GM12878 (cell line): ENCODE measurements at regions of chr7 and their contacts with region 1.

Region 1: GRCh38 chr7:18345641-18346234 is 149.8 kb upstream of the HDAC9 start:
- DNase-seq: no peak
- ATAC-seq: peak; percentile 79
- H3K4me3 ChIP-seq: no peak overlapping the region
- H3K27ac ChIP-seq: no peak overlapping the region
- H3K4me1 ChIP-seq: no peaks in the 10 kb centered on the region
- H3K27me3 ChIP-seq: no peaks in the 10 kb centered on the region
- CTCF ChIP-seq: peak; percentile 67 to 73 (median 69)
- EP300 ChIP-seq: no peak
- POLR2A ChIP-seq: no peak
- RAD21 ChIP-seq: peak; percentile 80

Region 2: GRCh38 chr7:17680943-17681351 is 664.8 kb before region 1 on chr7:
- CTCF ChIA-PET with region 1: interaction called, 6 read pairs
- POLR2A ChIA-PET with region 1: no interaction called
- RAD21 ChIA-PET with region 1: interaction called, 8 read pairs
- SMC1A ChIA-PET with region 1: interaction called, 4 read pairs
- in situ Hi-C with region 1: loop called (anchors 25 kb)
- intact Hi-C with region 1: loop called (anchors 5 kb)
- DNase-seq: no peak
- ATAC-seq: peak; percentile 64; the same call in 2 of the 3 replicates
- H3K4me3 ChIP-seq: no peak overlapping the region
- H3K27ac ChIP-seq: no peak overlapping the region
- H3K4me1 ChIP-seq: no peaks in the 10 kb centered on the region
- H3K27me3 ChIP-seq: 0 out of 4 replicates have a peak, but pooled peaks cover 0 to 4% of the 10 kb centered on the region in 2 experiments
- CTCF ChIP-seq: peak in 2 of 3 experiments; percentile 40 to 44; a peak in 4 of 6 replicates
- EP300 ChIP-seq: no peak
- POLR2A ChIP-seq: no peak
- RAD21 ChIP-seq: peak; percentile 45

Region 3: DNA sequence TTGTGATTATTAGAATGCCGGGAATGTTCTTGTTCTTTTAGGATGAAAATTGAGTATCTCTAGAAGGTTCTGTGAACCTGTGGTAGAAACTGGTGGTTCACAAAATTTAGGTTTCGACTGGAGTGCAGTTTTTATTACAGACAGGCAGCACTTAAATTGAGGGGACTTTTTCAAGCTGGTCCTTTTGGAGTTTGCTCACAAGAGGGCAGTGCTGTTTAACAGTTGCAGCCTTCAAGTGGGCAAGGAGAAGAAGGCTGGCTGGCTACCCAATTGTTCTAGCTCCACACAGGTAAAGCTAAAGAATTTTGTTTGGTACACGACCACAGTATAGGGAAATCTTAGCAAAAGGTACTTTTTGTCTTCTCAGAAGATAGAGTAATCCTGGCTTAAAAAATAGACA is 639.0 kb before region 1 on chr7:
- CTCF ChIA-PET with region 1: interaction called, 15 read pairs
- POLR2A ChIA-PET with region 1: no interaction called
- RAD21 ChIA-PET with region 1: interaction called, 4 read pairs
- SMC1A ChIA-PET with region 1: interaction called, 5 read pairs
- in situ Hi-C with region 1: no loop called
- intact Hi-C with region 1: loop called (anchors 2 kb)
- DNase-seq: peak; percentile 12
- ATAC-seq: peak; percentile 93
- H3K4me3 ChIP-seq: no peak overlapping the region
- H3K27ac ChIP-seq: no peak overlapping the region
- H3K4me1 ChIP-seq: no peaks in the 10 kb centered on the region
- H3K27me3 ChIP-seq: no peaks in the 10 kb centered on the region
- CTCF ChIP-seq: peak; percentile 64 to 74 (median 68)
- EP300 ChIP-seq: no peak
- POLR2A ChIP-seq: no peak
- RAD21 ChIP-seq: peak; percentile 94

Region 4: GRCh38 chr7:18064242-18064838 is 281.4 kb before region 1 on chr7:
- CTCF ChIA-PET with region 1: interaction called, 5 read pairs
- POLR2A ChIA-PET with region 1: no interaction called
- RAD21 ChIA-PET with region 1: no interaction called
- SMC1A ChIA-PET with region 1: interaction called, 3 read pairs
- in situ Hi-C with region 1: no loop called
- intact Hi-C with region 1: loop called (anchors 1 kb)
- DNase-seq: no peak
- ATAC-seq: peak; percentile 68
- H3K4me3 ChIP-seq: no peak overlapping the region
- H3K27ac ChIP-seq: no peak overlapping the region
- H3K4me1 ChIP-seq: no peaks in the 10 kb centered on the region
- H3K27me3 ChIP-seq: no peaks in the 10 kb centered on the region
- CTCF ChIP-seq: peak; percentile 40 to 64 (median 64)
- EP300 ChIP-seq: no peak
- POLR2A ChIP-seq: no peak
- RAD21 ChIP-seq: peak; percentile 23; the same call in 1 of the 2 replicates

Region 5: DNA sequence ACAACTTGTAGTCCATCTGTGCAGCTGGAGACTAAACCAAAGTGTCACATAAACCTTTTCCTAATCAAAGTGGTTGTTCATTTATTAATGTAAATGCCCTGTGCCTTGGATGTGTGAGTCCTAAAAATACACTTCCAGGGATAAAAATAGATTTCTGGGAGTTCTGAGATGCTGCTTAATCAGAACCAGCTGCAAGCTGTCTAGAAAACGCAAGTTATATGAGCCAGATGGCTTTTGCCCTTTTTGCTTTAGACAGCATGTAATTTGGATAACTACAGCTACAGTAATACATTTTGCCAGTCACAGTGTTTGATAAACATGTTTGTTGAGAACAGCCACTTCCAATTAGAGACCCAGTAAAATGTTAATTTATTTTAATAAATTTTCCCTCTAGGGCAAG is 133.0 kb before region 1 on chr7:
- CTCF ChIA-PET with region 1: interaction called, 26 read pairs
- POLR2A ChIA-PET with region 1: no interaction called
- RAD21 ChIA-PET with region 1: interaction called, 3 read pairs
- SMC1A ChIA-PET with region 1: interaction called, 3 read pairs
- in situ Hi-C with region 1: no loop called
- intact Hi-C with region 1: no loop called
- DNase-seq: no peak
- ATAC-seq: no peak
- H3K4me3 ChIP-seq: no peak overlapping the region
- H3K27ac ChIP-seq: no peak overlapping the region
- H3K4me1 ChIP-seq: no peaks in the 10 kb centered on the region
- H3K27me3 ChIP-seq: no peaks in the 10 kb centered on the region; a peak in 1 of 4 replicates
- CTCF ChIP-seq: no peak
- EP300 ChIP-seq: no peak
- POLR2A ChIP-seq: no peak
- RAD21 ChIP-seq: no peak

Region 6: DNA sequence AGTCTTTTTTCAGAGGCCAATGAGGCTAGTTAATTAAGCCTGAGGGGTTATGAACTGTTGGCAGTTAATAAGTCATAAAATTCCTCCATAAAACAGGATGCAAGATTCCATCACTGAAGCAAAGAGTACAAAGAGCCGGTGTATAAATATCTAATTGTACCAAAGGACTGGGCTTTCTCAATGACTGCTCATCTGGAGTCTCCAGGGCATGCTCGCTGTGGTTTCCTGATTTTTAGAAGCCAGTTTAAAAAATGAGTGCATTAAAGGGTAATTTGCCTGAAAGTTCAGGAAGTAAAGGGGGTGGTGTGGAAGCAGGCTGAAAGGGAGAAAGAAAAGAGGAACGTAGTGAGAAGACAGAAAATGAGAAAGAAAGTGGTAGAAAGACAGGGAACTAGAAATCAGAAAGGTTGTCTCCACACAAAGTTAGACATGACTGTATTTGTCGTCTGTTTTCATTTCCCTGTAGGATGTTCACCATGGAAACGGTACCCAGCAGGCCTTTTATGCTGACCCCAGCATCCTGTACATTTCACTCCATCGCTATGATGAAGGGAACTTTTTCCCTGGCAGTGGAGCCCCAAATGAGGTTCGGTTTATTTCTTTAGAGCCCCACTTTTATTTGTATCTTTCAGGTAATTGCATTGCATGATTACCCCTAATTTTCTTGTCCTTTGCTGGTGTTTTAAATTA is 489.4 kb after region 1 on chr7:
- CTCF ChIA-PET with region 1: no interaction called
- POLR2A ChIA-PET with region 1: no interaction called
- RAD21 ChIA-PET with region 1: no interaction called
- SMC1A ChIA-PET with region 1: no interaction called
- in situ Hi-C with region 1: no loop called
- intact Hi-C with region 1: no loop called
- DNase-seq: no peak
- ATAC-seq: no peak
- H3K4me3 ChIP-seq: no peak overlapping the region
- H3K27ac ChIP-seq: no peak overlapping the region
- H3K4me1 ChIP-seq: no peaks in the 10 kb centered on the region
- H3K27me3 ChIP-seq: no peaks in the 10 kb centered on the region
- CTCF ChIP-seq: no peak
- EP300 ChIP-seq: no peak
- POLR2A ChIP-seq: no peak
- RAD21 ChIP-seq: no peak